Panc1 (cell line): ENCODE measurements at regions of chr12 and their contacts with region 1.

Region 1: DNA sequence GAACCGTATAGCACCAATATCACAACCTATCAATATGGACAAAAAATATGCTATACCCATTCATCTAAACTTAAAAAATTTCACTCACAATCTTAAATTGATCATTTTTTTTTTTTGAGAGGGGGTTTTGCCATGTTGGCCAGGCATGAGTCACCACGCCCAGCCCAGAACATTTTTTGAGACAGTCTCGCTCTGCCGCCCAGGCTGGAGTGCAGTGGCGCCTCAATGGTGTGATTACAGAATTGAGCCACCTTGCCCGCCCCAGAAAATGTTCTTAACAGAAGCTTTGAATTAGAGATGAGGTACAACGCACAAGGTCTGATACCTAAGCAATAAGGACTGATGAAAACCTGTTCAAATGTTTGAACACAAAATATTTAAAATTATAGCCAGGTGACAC is 15.8 kb upstream of the ATP5F1B start:
- DNase-seq: no peak
- ATAC-seq: no peak
- H3K4me3 ChIP-seq: no peak overlapping the region
- H3K27ac ChIP-seq: no peak overlapping the region
- H3K4me1 ChIP-seq: no peaks in the 10 kb centered on the region
- H3K27me3 ChIP-seq: no peaks in the 10 kb centered on the region
- CTCF ChIP-seq: no peak

Region 2: DNA sequence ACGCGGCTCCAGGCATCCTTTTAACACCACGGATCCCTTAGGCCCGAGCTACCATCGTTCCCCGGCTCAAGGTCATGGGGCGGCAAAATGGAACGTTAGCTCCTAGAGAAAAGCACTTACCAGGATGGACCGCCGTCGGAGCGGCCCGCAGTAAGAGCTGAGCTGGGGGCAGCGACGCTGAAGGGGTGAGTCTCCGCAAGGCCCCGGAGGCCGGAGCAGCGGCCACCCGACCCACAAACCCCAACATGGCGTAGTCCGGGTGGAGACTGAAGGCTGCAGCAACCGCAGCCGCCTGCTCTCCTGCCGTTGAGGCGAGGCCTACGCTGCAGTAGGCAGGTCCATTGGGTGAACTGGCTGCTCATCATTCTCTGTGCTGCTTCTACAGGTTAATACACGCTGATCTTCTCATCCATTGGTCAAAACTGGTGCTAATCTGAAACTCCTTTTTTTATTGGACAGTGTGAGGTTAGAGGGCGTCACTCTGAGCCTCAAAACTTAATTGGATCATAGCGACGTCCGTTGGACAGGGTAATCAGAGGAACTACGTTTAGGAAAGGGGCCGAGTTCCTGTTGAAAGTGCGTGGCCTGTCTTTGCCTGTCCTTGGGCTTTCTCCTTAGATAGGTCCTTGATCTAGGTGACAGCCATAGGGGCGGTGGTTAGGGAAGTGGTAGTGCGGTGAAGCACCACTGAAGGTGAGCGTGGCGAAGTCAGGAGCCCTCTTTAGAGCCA is 15.7 kb before region 1 on chr12 and contains the start of gene ATP5F1B:
- CTCF ChIA-PET with region 1: interaction called, 17 read pairs
- POLR2A ChIA-PET with region 1: no interaction called
- in situ Hi-C with region 1: no loop called
- intact Hi-C with region 1: no loop called
- DNase-seq: peak; percentile 100
- ATAC-seq: peak; percentile 99
- H3K4me3 ChIP-seq: peak within 1 kb of the TSS; percentile 85 to 97
- H3K27ac ChIP-seq: peak within 1 kb of the TSS; percentile 98
- H3K4me1 ChIP-seq: peaks cover 19% of the 10 kb centered on the region; the same call in 1 of the 2 replicates
- H3K27me3 ChIP-seq: no peaks in the 10 kb centered on the region
- CTCF ChIP-seq: no peak
- total RNA-seq, gene ATP5F1B: 999 TPM

Region 3: GRCh38 chr12:56677680-56678079 is 16.1 kb after region 1 on chr12:
- CTCF ChIA-PET with region 1: no interaction called
- POLR2A ChIA-PET with region 1: interaction called, 11 read pairs
- in situ Hi-C with region 1: no loop called
- intact Hi-C with region 1: no loop called
- DNase-seq: no peak
- ATAC-seq: no peak
- H3K4me3 ChIP-seq: no peak overlapping the region
- H3K27ac ChIP-seq: no peak overlapping the region
- H3K4me1 ChIP-seq: peaks cover 9% of the 10 kb centered on the region; the same call in 1 of the 2 replicates
- H3K27me3 ChIP-seq: no peaks in the 10 kb centered on the region
- CTCF ChIP-seq: no peak

Region 4: DNA sequence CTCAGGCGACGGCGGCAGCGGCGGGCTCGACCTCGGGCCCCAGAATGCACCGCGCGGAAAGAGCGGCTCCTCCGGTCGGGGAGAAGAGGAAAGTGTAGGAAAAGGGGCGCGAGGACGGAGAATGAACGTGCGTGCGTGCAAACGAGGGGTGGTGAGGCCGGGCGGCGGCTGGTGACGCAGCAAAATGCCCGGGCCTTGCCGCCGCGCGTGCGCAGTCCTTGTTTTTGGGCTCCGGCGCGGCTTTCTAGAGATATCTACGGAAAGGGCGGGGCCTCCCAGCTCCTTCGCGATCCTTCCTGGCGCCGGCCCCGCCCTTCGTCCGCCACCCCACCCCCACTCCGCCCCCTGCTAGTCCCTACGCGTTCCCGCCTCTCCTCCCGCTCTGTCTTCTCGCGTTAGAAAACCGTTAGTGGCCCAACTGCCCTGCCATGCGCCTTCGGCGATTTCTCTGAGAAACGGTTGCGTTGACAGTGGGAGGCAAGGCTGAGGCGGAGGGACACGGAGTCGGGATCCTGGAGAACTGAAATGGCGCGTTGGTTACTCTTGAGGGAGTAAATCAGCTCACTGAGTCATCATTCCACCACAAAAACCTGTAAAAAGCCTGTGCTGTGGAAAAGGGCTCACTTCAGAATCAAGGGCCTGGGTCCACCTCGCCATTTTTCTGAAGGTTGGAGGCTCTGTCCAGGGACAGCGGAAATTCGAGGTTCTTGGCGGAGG is 26.7 kb after region 1 on chr12 and contains the start of gene PTGES3:
- CTCF ChIA-PET with region 1: no interaction called
- POLR2A ChIA-PET with region 1: no interaction called
- in situ Hi-C with region 1: no loop called
- intact Hi-C with region 1: no loop called
- DNase-seq: peak; percentile 92
- ATAC-seq: peak; percentile 88
- H3K4me3 ChIP-seq: peak within 1 kb of the TSS; percentile 97 to 99
- H3K27ac ChIP-seq: peak within 1 kb of the TSS; percentile 100
- H3K4me1 ChIP-seq: no peaks in the 10 kb centered on the region
- H3K27me3 ChIP-seq: no peaks in the 10 kb centered on the region
- CTCF ChIP-seq: no peak
- total RNA-seq, gene PTGES3: 339 TPM

Region 5: GRCh38 chr12:56751712-56752598 is 90.4 kb after region 1 on chr12 and contains the start of gene PRIM1:
- CTCF ChIA-PET with region 1: interaction called, 14 read pairs
- POLR2A ChIA-PET with region 1: no interaction called
- in situ Hi-C with region 1: no loop called
- intact Hi-C with region 1: no loop called
- DNase-seq: peak; percentile 53
- ATAC-seq: peak; percentile 97
- H3K4me3 ChIP-seq: peak within 1 kb of the TSS; percentile 79 to 91
- H3K27ac ChIP-seq: peak within 1 kb of the TSS; percentile 93
- H3K4me1 ChIP-seq: peaks cover 5% of the 10 kb centered on the region; the same call in 1 of the 2 replicates
- H3K27me3 ChIP-seq: no peaks in the 10 kb centered on the region
- CTCF ChIP-seq: no peak
- total RNA-seq, gene PRIM1: 25.0 TPM